ENCODE measurements at regions of chr2 and their contacts with region 1.

Region 1: GRCh38 chr2:219294356-219295351 is 14.5 kb downstream of the PTPRN start:
- DNase-seq: peak; percentile 90
- ATAC-seq: peak; percentile 82
- H3K4me3 Mint-ChIP-seq: peak overlapping the region; percentile 88
- H3K27ac Mint-ChIP-seq: peak overlapping the region; percentile 7; the same call in 1 of the 2 replicates
- H3K4me1 Mint-ChIP-seq: peaks cover 21% of the 10 kb centered on the region
- H3K27me3 Mint-ChIP-seq: peaks cover 64% of the 10 kb centered on the region
- CTCF ChIP-seq: peak; percentile 96

Region 2: GRCh38 chr2:219002395-219003266 is 292.0 kb before region 1 on chr2:
- CTCF ChIA-PET with region 1: interaction called, 13 read pairs
- POLR2A ChIA-PET with region 1: no interaction called
- DNase-seq: peak; percentile 95
- ATAC-seq: peak; percentile 69
- H3K4me3 Mint-ChIP-seq: peak overlapping the region; percentile 83
- H3K27ac Mint-ChIP-seq: no peak overlapping the region
- H3K4me1 Mint-ChIP-seq: peaks cover 22% of the 10 kb centered on the region
- H3K27me3 Mint-ChIP-seq: peaks cover 100% of the 10 kb centered on the region
- CTCF ChIP-seq: peak; percentile 29; the same call in 1 of the 2 replicates

Region 3: DNA sequence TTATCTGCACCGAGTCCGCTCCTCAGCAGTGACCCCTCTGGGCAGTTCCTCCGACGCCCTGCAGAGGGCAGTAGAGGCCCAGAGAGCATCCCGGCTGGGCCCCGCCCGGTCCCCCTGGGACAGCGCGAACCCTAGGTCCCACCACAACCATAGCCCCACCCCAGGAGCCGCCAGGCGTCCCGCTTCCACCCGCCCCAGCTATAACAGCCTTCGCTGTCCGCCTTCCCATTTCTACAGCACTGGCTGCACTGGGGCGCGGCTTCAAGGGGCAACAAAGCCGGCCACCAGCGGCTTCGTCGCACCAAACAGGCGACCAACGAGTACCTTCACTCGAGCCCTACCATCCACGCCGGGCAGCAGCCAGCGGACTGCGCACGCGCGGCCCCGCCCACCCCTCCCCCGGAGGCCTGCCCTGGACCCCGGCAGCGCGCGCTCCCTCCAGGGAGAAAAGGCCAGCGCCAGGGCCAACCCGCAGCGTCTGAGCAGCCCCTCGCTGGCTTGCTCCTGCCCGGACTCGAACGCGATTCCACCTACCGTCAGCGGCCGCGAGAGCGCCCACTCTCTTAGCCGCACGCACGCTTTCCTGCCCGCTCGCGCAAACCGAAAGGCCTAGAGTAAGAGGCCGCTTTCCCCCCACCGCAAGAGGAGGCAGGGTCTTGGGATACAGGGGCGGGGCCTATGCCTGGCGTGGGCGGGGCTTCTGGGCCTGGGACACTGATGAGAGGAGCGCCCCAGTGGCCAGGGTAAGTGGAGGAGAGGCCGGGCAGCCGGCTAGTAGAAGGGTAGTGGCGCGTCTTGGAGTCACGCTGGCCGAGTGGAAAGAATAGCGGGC is 134.3 kb before region 1 on chr2 and contains the start of gene NHEJ1:
- CTCF ChIA-PET with region 1: interaction called, 12 read pairs
- POLR2A ChIA-PET with region 1: no interaction called
- DNase-seq: peak; percentile 99
- ATAC-seq: peak; percentile 96
- H3K4me3 Mint-ChIP-seq: peak within 1 kb of the TSS; percentile 79
- H3K27ac Mint-ChIP-seq: peak within 1 kb of the TSS; percentile 87
- H3K4me1 Mint-ChIP-seq: peaks cover 17% of the 10 kb centered on the region
- H3K27me3 Mint-ChIP-seq: peaks cover 19% of the 10 kb centered on the region
- CTCF ChIP-seq: peak; percentile 98
- total RNA-seq, gene NHEJ1: 18.4 to 22.3 TPM (median 21.3 TPM) in 3 replicates

Region 4: GRCh38 chr2:219218732-219219701 is 75.6 kb before region 1 on chr2 and contains the start of gene ABCB6:
- CTCF ChIA-PET with region 1: interaction called, 24 read pairs
- POLR2A ChIA-PET with region 1: interaction called, 3 read pairs
- DNase-seq: peak; percentile 92
- ATAC-seq: peak; percentile 74
- H3K4me3 Mint-ChIP-seq: peak within 1 kb of the TSS; percentile 85
- H3K27ac Mint-ChIP-seq: peak within 1 kb of the TSS; percentile 79
- H3K4me1 Mint-ChIP-seq: peaks cover 25% of the 10 kb centered on the region
- H3K27me3 Mint-ChIP-seq: no peaks in the 10 kb centered on the region
- CTCF ChIP-seq: no peak
- total RNA-seq, gene ABCB6: 42.1 to 45.3 TPM (median 44.8 TPM) in 3 replicates

Region 5: DNA sequence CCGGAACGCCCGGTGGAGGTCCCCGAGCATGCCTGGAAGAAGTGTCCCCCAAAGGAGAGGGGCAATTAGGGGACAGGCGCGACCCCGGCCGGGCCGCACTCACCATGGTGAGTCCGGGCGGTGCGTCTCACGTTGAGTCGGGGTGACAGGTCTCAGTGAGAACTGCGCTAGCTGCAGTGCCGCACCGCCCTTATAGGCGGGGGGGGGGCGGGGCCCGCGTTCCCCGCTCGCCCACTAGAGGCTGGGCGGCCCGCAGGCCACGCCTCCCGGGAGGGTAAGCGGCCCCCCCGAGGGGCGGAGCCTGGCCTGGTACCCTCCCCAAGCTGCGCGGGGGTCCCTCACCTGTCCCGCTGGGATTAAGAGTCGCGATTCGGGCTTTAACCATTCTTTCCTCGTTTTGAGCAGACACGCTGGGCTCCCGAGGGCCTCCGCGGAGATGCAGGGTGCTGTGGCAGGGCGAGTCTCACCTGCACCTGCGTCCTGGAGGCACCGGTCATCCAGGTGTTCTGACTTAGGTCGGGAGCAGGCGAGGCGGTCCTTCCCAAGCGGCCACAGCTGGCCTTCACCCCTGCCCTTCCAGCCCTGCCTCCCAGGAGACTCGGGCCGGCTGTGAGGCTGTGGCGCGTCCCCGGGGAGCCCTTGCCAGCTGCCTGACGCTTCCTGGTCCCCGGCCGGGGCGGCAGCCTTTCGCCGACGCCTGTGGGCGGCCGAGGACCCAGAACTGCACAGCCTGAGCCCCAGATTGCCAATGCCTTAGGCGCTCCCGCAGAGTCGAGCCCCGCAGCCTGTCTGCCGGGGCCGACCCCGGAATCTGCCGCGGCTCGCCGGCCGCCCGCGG is 40.7 kb before region 1 on chr2 and contains the start of gene TUBA4A:
- CTCF ChIA-PET with region 1: interaction called, 33 read pairs
- POLR2A ChIA-PET with region 1: interaction called, 4 read pairs
- DNase-seq: peak; percentile 85
- ATAC-seq: peak; percentile 81
- H3K4me3 Mint-ChIP-seq: peak within 1 kb of the TSS; percentile 79
- H3K27ac Mint-ChIP-seq: peak within 1 kb of the TSS; percentile 41; the same call in 1 of the 2 replicates
- H3K4me1 Mint-ChIP-seq: peaks cover 25% of the 10 kb centered on the region
- H3K27me3 Mint-ChIP-seq: peaks cover 69% of the 10 kb centered on the region
- CTCF ChIP-seq: no peak
- total RNA-seq, gene TUBA4A: 40.8 to 58.7 TPM (median 52.3 TPM) in 3 replicates

Region 6: GRCh38 chr2:219331560-219332213 is 37.0 kb after region 1 on chr2:
- CTCF ChIA-PET with region 1: interaction called, 12 read pairs
- POLR2A ChIA-PET with region 1: no interaction called
- DNase-seq: peak; percentile 69
- ATAC-seq: peak; percentile 78
- H3K4me3 Mint-ChIP-seq: peak overlapping the region; percentile 54
- H3K27ac Mint-ChIP-seq: no peak overlapping the region
- H3K4me1 Mint-ChIP-seq: peaks cover 11% of the 10 kb centered on the region
- H3K27me3 Mint-ChIP-seq: peaks cover 94% of the 10 kb centered on the region
- CTCF ChIP-seq: no peak

Region 7: GRCh38 chr2:219362524-219363164 is 68.0 kb after region 1 on chr2:
- CTCF ChIA-PET with region 1: interaction called, 12 read pairs
- POLR2A ChIA-PET with region 1: no interaction called
- DNase-seq: no peak
- ATAC-seq: no peak
- H3K4me3 Mint-ChIP-seq: no peak overlapping the region
- H3K27ac Mint-ChIP-seq: no peak overlapping the region
- H3K4me1 Mint-ChIP-seq: peaks cover 2% of the 10 kb centered on the region; the same call in 1 of the 2 replicates
- H3K27me3 Mint-ChIP-seq: peaks cover 41% of the 10 kb centered on the region
- CTCF ChIP-seq: no peak

Measured in WTC11 (cell line).